ENCODE measurements at regions of chr1 and their contacts with region 1.

Region 1: DNA sequence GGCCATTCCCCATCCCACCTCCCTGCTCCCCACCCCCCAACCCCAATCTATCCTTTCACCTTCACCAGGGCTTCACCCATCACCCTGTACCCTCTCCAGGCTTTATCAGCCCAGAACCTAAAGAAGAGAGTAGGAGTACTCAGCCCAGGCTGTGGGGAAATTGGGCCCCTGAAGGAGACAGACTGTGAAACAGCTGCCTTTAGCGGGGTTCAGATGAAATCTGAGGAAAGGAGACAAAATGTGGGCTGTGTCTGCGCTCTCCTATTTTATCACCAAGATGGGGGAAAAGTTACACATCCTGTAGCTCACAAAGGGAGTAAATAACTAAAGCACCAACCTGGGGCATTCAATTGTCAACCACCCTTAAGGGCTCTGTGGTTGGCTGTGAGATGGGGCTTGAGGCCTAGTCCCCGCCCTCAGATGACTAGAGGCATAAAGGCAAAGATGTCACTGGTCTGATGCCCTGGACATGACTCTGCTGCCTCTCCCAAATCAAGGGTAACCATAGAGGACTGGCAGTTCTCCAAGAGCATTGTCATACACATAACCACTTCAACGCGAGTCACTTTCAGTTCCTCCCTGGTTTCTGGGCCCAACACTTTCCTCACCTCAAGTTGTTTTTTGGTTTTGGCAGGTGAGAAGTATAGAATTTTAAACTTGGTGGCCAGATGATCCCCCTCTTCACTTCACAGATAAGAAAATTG is 30.0 kb downstream of the SLC27A3 start:
- DNase-seq: peak; percentile 98
- ATAC-seq: peak; percentile 99
- H3K4me3 ChIP-seq: 0 out of 2 replicates have a peak overlapping the region, but pooled peaks have one; percentile 38
- H3K27ac ChIP-seq: peak overlapping the region; percentile 89
- H3K4me1 ChIP-seq: peaks cover 39% of the 10 kb centered on the region
- H3K27me3 ChIP-seq: no peaks in the 10 kb centered on the region
- CTCF ChIP-seq: no peak
- EP300 ChIP-seq: peak; percentile 90 to 98
- POLR2A ChIP-seq: peak; percentile 38; the same call in 1 of the 2 replicates
- RAD21 ChIP-seq: no peak

Region 2: GRCh38 chr1:153404768-153405167 is 400.4 kb before region 1 on chr1:
- CTCF ChIA-PET with region 1: no interaction called
- POLR2A ChIA-PET with region 1: no interaction called
- RAD21 ChIA-PET with region 1: no interaction called
- SMC1A ChIA-PET with region 1: no interaction called
- in situ Hi-C with region 1: no loop called
- intact Hi-C with region 1: no loop called
- DNase-seq: no peak
- ATAC-seq: peak; percentile 81
- H3K4me3 ChIP-seq: no peak overlapping the region
- H3K27ac ChIP-seq: no peak overlapping the region
- H3K4me1 ChIP-seq: no peaks in the 10 kb centered on the region
- H3K27me3 ChIP-seq: peaks cover 0 to 2% of the 10 kb centered on the region in 2 experiments; a peak in 1 of 4 replicates
- CTCF ChIP-seq: peak; percentile 44 to 55 (median 51); a peak in 5 of 6 replicates
- EP300 ChIP-seq: no peak
- POLR2A ChIP-seq: no peak
- RAD21 ChIP-seq: 0 out of 2 replicates have a peak, but pooled peaks have one; percentile 34

Region 3: GRCh38 chr1:153670257-153670858 is 134.8 kb before region 1 on chr1:
- CTCF ChIA-PET with region 1: no interaction called
- POLR2A ChIA-PET with region 1: no interaction called
- RAD21 ChIA-PET with region 1: no interaction called
- SMC1A ChIA-PET with region 1: no interaction called
- in situ Hi-C with region 1: no loop called
- intact Hi-C with region 1: no loop called
- DNase-seq: no peak
- ATAC-seq: no peak; the same call in 2 of the 3 replicates
- H3K4me3 ChIP-seq: peak overlapping the region; percentile 99
- H3K27ac ChIP-seq: peak overlapping the region; percentile 85
- H3K4me1 ChIP-seq: peaks cover 4% of the 10 kb centered on the region; the same call in 1 of the 2 replicates
- H3K27me3 ChIP-seq: no peaks in the 10 kb centered on the region
- CTCF ChIP-seq: no peak
- EP300 ChIP-seq: no peak
- POLR2A ChIP-seq: no peak
- RAD21 ChIP-seq: no peak

Region 4: GRCh38 chr1:153790966-153791647 is 14.1 kb before region 1 on chr1:
- CTCF ChIA-PET with region 1: interaction called, 9 read pairs
- POLR2A ChIA-PET with region 1: interaction called, 6 read pairs
- RAD21 ChIA-PET with region 1: interaction called, 5 read pairs
- SMC1A ChIA-PET with region 1: interaction called, 21 read pairs
- in situ Hi-C with region 1: no loop called
- intact Hi-C with region 1: no loop called
- DNase-seq: peak; percentile 95
- ATAC-seq: peak; percentile 97
- H3K4me3 ChIP-seq: 0 out of 2 replicates have a peak overlapping the region, but pooled peaks have one; percentile 28
- H3K27ac ChIP-seq: peak overlapping the region; percentile 91
- H3K4me1 ChIP-seq: peaks cover 29% of the 10 kb centered on the region
- H3K27me3 ChIP-seq: no peaks in the 10 kb centered on the region
- CTCF ChIP-seq: no peak
- EP300 ChIP-seq: peak; percentile 54 to 63; a peak in 3 of 4 replicates
- POLR2A ChIP-seq: no peak
- RAD21 ChIP-seq: no peak

Region 5: DNA sequence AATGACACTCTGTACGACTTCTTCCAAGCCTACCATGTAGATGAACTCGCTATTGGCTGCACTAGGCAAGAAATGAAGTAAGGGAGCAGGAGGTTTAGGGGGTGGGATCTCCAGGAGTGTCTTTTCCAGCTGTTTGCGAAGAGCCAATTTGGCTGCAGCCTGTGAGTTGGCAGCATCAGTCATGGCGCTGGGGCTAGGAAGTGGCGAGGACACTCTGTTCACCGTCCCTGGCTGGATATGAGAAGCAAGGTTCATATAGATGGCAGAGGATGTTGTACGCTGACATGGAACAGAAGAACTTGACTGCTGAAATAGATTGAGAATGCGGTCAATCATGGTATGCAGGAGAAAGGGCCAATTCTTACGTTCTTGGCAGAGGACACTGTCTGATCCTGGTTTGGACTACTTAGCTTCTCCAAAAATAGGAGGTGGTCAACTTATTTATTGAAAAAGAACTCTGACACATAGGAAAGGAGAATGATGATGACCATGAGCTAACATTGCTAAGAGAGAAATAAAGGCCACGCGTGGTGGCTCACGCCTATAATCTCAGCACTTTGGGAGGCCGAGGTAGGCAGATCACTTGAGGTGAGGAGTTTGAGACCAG is 11.2 kb after region 1 on chr1:
- CTCF ChIA-PET with region 1: interaction called, 8 read pairs
- POLR2A ChIA-PET with region 1: interaction called, 14 read pairs
- RAD21 ChIA-PET with region 1: no interaction called
- SMC1A ChIA-PET with region 1: interaction called, 5 read pairs
- in situ Hi-C with region 1: no loop called
- intact Hi-C with region 1: no loop called
- DNase-seq: no peak
- ATAC-seq: no peak
- H3K4me3 ChIP-seq: no peak overlapping the region
- H3K27ac ChIP-seq: no peak overlapping the region
- H3K4me1 ChIP-seq: no peaks in the 10 kb centered on the region; the same call in 1 of the 2 replicates
- H3K27me3 ChIP-seq: no peaks in the 10 kb centered on the region
- CTCF ChIP-seq: no peak
- EP300 ChIP-seq: no peak
- POLR2A ChIP-seq: no peak
- RAD21 ChIP-seq: no peak

Region 6: DNA sequence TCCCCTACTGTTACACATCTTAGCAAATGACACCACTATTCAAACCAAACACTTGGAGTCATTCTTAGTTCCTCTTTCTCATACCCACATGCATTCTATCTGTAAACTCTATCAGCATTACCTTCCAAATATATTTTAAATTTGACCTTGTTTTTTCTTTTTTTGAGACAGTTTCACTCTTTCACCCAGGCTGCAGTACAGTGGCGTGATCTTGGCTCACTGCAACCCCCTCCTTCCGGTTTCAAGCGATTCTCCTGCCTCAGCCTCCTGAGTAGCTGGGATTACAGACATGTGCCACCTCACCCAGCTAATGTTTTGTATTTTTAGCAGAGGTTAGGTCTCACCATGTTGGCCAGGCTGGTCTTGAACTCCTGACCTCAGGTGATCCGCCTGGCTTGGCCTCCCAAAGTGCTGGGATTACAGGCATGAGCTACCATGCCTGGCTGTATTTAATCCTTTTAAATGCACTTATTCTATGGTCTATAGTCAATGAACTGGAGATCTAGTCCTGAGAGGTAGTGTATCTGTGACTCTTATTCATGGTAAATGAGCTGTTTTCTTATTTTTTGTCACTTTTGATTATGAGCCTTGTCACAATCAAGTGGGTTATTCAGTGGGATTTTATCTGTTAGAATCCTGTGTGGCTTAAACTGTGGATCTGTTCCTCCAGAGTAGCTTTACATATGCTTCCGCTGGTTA is 44.4 kb after region 1 on chr1:
- CTCF ChIA-PET with region 1: interaction called, 5 read pairs
- POLR2A ChIA-PET with region 1: no interaction called
- RAD21 ChIA-PET with region 1: interaction called, 8 read pairs
- SMC1A ChIA-PET with region 1: interaction called, 10 read pairs
- in situ Hi-C with region 1: no loop called
- intact Hi-C with region 1: no loop called
- DNase-seq: peak; percentile 78
- ATAC-seq: peak; percentile 92
- H3K4me3 ChIP-seq: 0 out of 2 replicates have a peak overlapping the region, but pooled peaks have one; percentile 4
- H3K27ac ChIP-seq: peak overlapping the region; percentile 70
- H3K4me1 ChIP-seq: peaks cover 46% of the 10 kb centered on the region
- H3K27me3 ChIP-seq: no peaks in the 10 kb centered on the region
- CTCF ChIP-seq: no peak
- EP300 ChIP-seq: peak in 1 of 2 experiments; percentile 20; a peak in 1 of 4 replicates
- POLR2A ChIP-seq: no peak
- RAD21 ChIP-seq: no peak

Region 7: DNA sequence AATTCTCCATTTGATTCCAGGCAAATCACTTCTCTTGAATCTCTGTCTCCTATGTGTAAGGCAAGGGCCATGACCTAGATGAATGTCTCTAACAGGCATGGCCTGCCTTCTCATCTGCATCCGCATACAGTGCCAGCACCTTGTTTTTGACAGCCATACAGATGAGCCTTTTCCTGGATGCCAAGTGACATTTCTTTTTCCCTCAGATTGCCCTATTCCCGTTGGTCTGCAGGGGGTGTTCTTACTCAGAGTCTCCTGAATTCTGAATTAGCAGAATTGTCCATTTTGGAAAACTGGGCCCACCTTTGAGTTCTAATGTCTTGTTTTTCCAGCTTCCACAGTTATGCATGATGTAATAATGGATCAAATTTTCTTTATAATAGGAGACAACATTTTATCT is 890.8 kb after region 1 on chr1:
- CTCF ChIA-PET with region 1: no interaction called
- POLR2A ChIA-PET with region 1: no interaction called
- RAD21 ChIA-PET with region 1: no interaction called
- SMC1A ChIA-PET with region 1: no interaction called
- in situ Hi-C with region 1: no loop called
- intact Hi-C with region 1: no loop called
- DNase-seq: no peak
- ATAC-seq: no peak
- H3K4me3 ChIP-seq: no peak overlapping the region
- H3K27ac ChIP-seq: no peak overlapping the region
- H3K4me1 ChIP-seq: no peaks in the 10 kb centered on the region; the same call in 1 of the 2 replicates
- H3K27me3 ChIP-seq: no peaks in the 10 kb centered on the region
- CTCF ChIP-seq: peak in 1 of 3 experiments; percentile 16; a peak in 1 of 6 replicates
- EP300 ChIP-seq: no peak
- POLR2A ChIP-seq: no peak
- RAD21 ChIP-seq: 0 out of 2 replicates have a peak, but pooled peaks have one; percentile 11

Measured in GM12878 (cell line).